ENCODE measurements at regions of chr2 and their contacts with region 1.

Region 1: DNA sequence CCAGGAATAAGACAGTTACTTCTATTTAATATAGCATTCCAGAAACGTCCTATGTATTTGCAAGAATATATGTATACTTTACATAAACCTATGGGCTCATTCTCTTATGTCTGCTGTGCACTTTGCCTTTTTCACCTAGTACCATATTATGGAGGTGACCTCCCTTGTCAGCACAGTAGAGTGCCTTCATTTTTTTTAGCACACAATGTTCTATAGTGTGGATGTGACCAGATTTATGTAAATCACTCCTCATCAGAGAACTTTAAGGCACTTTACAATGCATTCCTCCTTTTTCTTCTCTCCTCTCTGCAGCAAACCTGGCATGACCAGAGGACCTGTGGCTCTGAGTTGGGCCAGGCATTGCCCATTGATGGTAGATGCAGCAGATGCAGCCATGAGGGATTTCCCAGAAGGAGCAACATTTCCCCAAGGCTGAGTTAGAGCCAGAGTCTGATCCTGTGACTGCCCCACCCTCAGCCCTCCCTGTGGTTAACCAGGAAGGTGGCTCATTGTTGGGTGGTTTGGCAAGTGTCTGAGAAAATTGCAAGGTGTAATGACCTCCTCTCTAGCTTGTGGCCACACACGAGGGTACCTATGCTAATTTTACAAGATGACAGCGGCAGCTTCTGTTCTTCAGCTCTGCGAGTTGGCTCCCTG is 76.5 kb upstream of the DLX2 start:
- DNase-seq: no peak
- ATAC-seq: no peak
- H3K4me3 ChIP-seq: no peak overlapping the region
- H3K27ac ChIP-seq: no peak overlapping the region
- H3K4me1 ChIP-seq: peaks cover 0 to 18% (median 10%) of the 10 kb centered on the region in 9 donors
- H3K27me3 ChIP-seq: no peaks in the 10 kb centered on the region
- CTCF ChIP-seq: no peak

Region 2: DNA sequence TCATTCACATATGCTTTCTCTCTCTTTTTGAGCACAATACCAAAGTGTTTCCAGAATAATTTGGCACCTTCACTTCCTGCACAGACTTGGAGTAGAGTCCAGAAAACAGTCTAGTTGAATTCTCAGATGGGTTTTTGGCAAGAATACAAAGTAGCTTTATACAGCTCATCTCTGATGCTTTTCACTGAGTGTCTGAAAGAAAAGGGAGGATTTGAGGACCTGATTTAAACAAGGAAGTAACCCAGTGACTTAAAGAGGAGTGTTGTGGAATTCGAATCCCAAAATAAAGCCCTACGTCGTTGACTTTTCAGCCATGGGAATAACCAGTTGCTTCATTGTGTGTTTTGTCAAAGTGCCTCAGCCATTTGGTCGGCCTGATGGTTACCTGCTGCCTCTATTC is 147.6 kb before region 1 on chr2:
- intact Hi-C with region 1: no loop called
- DNase-seq: no peak
- ATAC-seq: no peak
- H3K4me3 ChIP-seq: no peak overlapping the region
- H3K27ac ChIP-seq: no peak overlapping the region
- H3K4me1 ChIP-seq: no peaks in the 10 kb centered on the region
- H3K27me3 ChIP-seq: no peaks in the 10 kb centered on the region
- CTCF ChIP-seq: no peak

Region 3: GRCh38 chr2:172215172-172215935 is 36.2 kb after region 1 on chr2:
- intact Hi-C with region 1: loop called in 1 of 10 experiments (anchors 5 kb)
- DNase-seq: no peak
- ATAC-seq: no peak
- H3K4me3 ChIP-seq: no peak overlapping the region
- H3K27ac ChIP-seq: no peak overlapping the region
- H3K4me1 ChIP-seq: peaks cover 0 to 7% (median 0%) of the 10 kb centered on the region in 9 donors
- H3K27me3 ChIP-seq: no peaks in the 10 kb centered on the region
- CTCF ChIP-seq: no peak

Region 4: DNA sequence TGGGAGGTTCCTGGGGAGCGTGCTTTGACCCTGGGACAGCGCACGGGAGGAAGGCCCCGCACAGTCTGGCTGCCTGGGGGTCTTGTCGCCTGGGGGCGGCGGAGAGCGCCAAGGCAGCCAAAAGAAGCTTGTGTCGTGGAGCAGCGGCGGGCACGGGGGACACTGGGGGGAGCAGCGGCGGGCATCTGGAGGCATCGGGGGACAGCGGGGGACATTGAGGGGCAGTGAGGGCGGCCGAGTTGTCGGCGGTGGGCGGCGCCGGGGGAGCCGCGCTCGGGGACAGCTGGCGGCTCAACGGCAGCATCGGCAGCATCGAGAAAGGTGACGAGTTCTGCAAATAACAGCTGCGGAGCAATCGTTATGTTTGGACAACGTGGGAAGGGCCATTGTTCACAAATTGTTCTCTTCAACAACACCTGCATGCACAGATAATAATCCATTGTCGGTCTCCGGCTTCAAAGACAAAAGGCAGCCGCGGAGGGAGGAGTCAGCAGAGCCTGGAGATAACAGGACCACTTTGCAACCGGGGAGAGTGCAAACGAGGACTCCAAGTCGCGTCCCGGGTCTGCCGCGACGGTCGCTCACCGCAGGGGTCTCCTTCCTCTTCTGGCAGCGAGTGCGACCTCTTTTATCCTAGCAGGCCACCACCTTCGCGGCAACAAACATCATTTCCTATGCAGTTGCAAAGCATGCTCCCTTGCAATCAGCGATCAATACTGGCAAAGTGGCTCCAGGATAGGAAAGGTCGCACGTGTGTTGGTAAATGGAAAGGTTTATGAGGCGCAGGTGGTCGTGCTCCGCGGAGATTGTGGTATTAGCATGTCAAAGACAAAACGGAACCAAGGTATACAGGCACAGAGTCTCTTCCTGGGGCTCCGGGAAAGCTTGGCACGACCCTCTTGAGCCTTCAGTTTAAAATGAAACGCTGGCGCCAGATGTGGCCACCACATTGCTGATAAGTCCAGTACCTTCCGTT is 55.8 kb after region 1 on chr2:
- intact Hi-C with region 1: loop called in 1 of 10 experiments (anchors 5 kb)
- DNase-seq: peak; percentile 13 to 21
- ATAC-seq: peak in 7 of 8 donors; percentile 20 to 47 (median 32)
- H3K4me3 ChIP-seq: peak overlapping the region; percentile 23 to 62 (median 48)
- H3K27ac ChIP-seq: peak overlapping the region in 6 of 10 donors; percentile 8 to 73 (median 48)
- H3K4me1 ChIP-seq: peaks cover 0 to 41% (median 21%) of the 10 kb centered on the region in 9 donors
- H3K27me3 ChIP-seq: peaks cover 0 to 52% (median 43%) of the 10 kb centered on the region in 7 donors
- CTCF ChIP-seq: no peak

Measured in heart right ventricle (tissue), 16 donors.